ENCODE measurements at regions of chr12 and their contacts with region 1.

Region 1: GRCh38 chr12:64759035-64759901 is at the start of gene GNS:
- DNase-seq: peak; percentile 81 to 95 (median 92)
- ATAC-seq: peak; percentile 86
- H3K4me3 ChIP-seq: peak within 1 kb of the TSS; percentile 70 to 80
- H3K4me3 Mint-ChIP-seq: peak within 1 kb of the TSS; percentile 97
- H3K27ac ChIP-seq: peak within 1 kb of the TSS; percentile 44 to 80
- H3K27ac Mint-ChIP-seq: peak within 1 kb of the TSS; percentile 93
- H3K4me1 ChIP-seq: peaks cover 24% of the 10 kb centered on the region
- H3K4me1 Mint-ChIP-seq: peaks cover 57% of the 10 kb centered on the region
- H3K27me3 ChIP-seq: no peaks in the 10 kb centered on the region
- H3K27me3 Mint-ChIP-seq: no peaks in the 10 kb centered on the region
- CTCF ChIP-seq: no peak
- total RNA-seq, gene GNS: 6.3 to 7.7 TPM

Region 2: DNA sequence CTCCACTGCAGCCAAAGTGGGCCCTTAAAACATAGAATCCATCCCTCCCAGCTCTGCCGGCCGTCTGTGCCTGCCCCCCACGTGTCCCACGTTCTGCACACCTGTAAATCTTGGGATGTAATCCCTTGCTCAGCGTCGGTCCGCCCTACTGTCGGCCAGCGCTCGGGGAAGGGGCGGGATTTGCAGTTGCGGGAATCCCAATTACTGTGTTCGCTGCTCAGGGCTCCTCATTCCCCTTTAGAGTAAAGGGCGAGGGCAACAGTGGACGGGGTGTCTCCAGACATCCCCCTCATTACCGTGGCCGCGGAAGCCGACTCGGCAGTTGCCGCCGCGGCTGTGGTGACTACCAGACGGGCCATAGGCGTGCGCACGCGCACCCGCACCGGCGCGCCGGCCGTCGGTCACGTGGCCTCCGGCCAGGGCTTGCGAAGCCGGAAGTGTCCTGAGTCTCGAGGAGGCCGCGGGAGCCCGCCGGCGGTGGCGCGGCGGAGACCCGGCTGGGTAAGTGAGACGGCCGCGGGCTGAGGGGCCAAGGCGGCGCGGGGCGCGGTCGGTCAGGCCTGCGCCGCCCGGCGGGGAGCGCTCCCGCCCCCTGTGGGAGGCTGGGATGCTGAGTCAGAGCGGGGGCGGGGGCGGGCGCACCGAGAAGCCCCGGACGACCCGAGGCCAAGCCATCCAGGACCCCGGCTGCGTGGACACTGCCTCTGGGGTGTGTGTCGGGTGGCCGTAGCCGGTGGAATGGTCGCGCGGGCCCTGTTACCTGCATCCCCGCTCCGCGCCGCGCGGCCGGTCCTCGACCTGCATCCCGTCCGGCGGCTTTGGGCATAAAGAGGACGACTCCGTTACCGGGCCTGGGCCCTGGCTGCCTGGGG is 307.3 kb before region 1 on chr12 and contains the start of gene TBK1:
- CTCF ChIA-PET with region 1: no interaction called
- POLR2A ChIA-PET with region 1: no interaction called
- intact Hi-C with region 1: loop called in 1 of 2 experiments (anchors 5 kb)
- DNase-seq: peak; percentile 8 to 76 (median 51)
- ATAC-seq: peak; percentile 64
- H3K4me3 ChIP-seq: peak within 1 kb of the TSS; percentile 88 to 99
- H3K4me3 Mint-ChIP-seq: peak within 1 kb of the TSS; percentile 89
- H3K27ac ChIP-seq: peak within 1 kb of the TSS; percentile 76 to 93
- H3K27ac Mint-ChIP-seq: peak within 1 kb of the TSS; percentile 90
- H3K4me1 ChIP-seq: peaks cover 8% of the 10 kb centered on the region
- H3K4me1 Mint-ChIP-seq: peaks cover 40% of the 10 kb centered on the region
- H3K27me3 ChIP-seq: no peaks in the 10 kb centered on the region
- H3K27me3 Mint-ChIP-seq: no peaks in the 10 kb centered on the region
- CTCF ChIP-seq: no peak
- total RNA-seq, gene TBK1: 6.2 to 6.7 TPM

Region 3: GRCh38 chr12:64650762-64651161 is 108.5 kb before region 1 on chr12:
- CTCF ChIA-PET with region 1: no interaction called
- POLR2A ChIA-PET with region 1: no interaction called
- intact Hi-C with region 1: no loop called
- DNase-seq: no peak
- ATAC-seq: no peak
- H3K4me3 ChIP-seq: no peak overlapping the region
- H3K4me3 Mint-ChIP-seq: peak overlapping the region; percentile 0
- H3K27ac ChIP-seq: no peak overlapping the region
- H3K27ac Mint-ChIP-seq: peak overlapping the region; percentile 68
- H3K4me1 ChIP-seq: peaks cover 62% of the 10 kb centered on the region
- H3K4me1 Mint-ChIP-seq: peaks cover 78% of the 10 kb centered on the region
- H3K27me3 ChIP-seq: no peaks in the 10 kb centered on the region
- H3K27me3 Mint-ChIP-seq: no peaks in the 10 kb centered on the region
- CTCF ChIP-seq: no peak

Region 4: DNA sequence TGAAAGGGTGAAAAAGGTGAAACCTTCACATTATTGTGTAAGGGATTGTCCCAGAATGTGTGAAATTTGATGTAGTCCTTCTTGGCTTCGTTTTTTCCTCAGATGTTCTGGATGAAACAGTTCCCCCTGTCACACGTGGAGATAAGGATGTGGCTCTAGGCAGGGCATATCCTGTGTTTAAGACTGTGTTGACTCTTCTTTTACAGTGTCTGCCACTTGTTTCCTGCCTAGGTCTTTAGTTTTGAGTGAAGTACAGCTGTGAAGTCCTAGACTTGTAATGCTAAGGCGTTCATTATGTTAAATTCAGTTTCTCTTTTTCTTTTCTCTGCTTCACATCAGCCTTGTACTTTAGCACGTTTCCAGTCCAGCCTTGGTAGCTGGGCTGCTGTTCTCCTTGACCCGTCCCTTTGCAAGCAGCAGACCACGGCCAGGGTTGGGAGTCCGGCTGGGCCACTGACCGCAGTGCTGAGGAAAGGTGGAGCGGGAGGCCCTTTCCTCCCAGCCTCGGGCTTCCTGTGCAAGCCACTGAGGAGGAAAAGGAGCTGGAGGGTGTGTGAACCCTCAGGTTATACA is 89.9 kb before region 1 on chr12:
- CTCF ChIA-PET with region 1: no interaction called
- POLR2A ChIA-PET with region 1: no interaction called
- intact Hi-C with region 1: no loop called
- DNase-seq: peak; percentile 18 to 94 (median 57)
- ATAC-seq: peak; percentile 79
- H3K4me3 ChIP-seq: peak overlapping the region; percentile 51 to 57
- H3K4me3 Mint-ChIP-seq: peak overlapping the region; percentile 87
- H3K27ac ChIP-seq: peak overlapping the region; percentile 77 to 94
- H3K27ac Mint-ChIP-seq: peak overlapping the region; percentile 98
- H3K4me1 ChIP-seq: peaks cover 92% of the 10 kb centered on the region
- H3K4me1 Mint-ChIP-seq: peaks cover 90% of the 10 kb centered on the region
- H3K27me3 ChIP-seq: no peaks in the 10 kb centered on the region
- H3K27me3 Mint-ChIP-seq: no peaks in the 10 kb centered on the region
- CTCF ChIP-seq: no peak

Region 5: DNA sequence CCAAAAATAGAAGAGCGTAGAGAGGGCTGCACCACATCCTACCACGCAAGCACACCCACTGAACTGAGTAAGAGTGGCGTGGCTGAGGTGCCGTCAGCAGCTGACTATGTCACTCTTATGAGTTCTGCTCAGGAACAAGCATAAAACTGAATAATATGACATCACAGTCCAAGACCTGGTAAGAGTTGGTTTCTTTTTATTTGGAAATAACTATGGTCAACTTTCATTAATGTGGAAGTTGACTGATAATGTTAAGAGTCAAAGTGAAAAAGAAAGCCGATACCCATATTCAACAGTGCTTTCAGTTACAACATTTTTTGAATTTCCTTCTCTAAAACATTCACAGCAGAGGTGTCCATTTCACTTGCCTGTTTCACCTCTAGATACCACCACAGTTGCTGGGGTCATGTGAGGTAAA is 44.7 kb before region 1 on chr12:
- CTCF ChIA-PET with region 1: no interaction called
- POLR2A ChIA-PET with region 1: no interaction called
- intact Hi-C with region 1: no loop called
- DNase-seq: peak in 5 of 9 experiments; percentile 20 to 79 (median 57)
- ATAC-seq: peak; percentile 94
- H3K4me3 ChIP-seq: no peak overlapping the region
- H3K4me3 Mint-ChIP-seq: no peak overlapping the region
- H3K27ac ChIP-seq: peak overlapping the region in 1 of 2 experiments; percentile 49
- H3K27ac Mint-ChIP-seq: peak overlapping the region; percentile 73
- H3K4me1 ChIP-seq: peaks cover 10% of the 10 kb centered on the region
- H3K4me1 Mint-ChIP-seq: peaks cover 31% of the 10 kb centered on the region
- H3K27me3 ChIP-seq: no peaks in the 10 kb centered on the region
- H3K27me3 Mint-ChIP-seq: no peaks in the 10 kb centered on the region
- CTCF ChIP-seq: no peak

Region 6: DNA sequence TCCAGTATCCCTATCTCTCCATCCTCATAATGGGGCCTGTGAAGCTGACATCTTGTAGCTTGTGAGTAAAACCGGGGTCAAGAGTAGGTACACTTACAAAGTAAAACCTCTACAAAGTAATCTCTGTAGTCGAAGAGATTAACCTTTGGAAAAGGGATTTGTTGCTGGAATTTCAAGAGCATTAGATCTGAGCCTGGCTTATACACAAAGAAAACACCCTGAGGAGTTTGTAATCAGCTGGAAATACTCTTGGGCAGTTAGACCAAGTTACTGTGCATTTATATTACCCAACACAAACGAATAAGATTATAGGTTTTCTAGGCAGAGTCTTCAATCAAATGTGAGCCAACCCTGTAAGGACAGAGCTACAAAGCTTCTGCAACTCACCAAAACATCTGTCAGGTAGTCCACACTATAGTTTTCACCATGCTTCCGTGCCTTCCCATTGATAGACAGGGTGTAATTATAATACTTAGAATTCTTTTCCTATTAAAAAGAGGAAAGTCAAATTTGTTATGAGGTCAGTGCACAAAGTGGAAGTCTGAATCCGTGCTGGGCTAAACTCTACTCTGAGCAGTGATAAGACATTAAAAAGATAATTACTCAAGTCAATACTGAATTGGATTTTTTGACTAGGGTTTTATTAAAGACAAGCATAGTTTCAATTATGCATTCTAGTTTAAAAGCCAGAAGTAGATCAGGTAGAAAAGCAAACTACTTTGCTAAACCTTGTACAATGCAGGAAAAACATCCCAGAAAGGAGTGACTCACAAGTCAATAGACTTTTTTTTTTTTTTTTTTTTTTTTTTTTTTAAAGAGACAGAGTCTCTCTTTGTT is 14.6 kb before region 1 on chr12:
- CTCF ChIA-PET with region 1: no interaction called
- POLR2A ChIA-PET with region 1: no interaction called
- intact Hi-C with region 1: no loop called
- DNase-seq: no peak
- ATAC-seq: no peak
- H3K4me3 ChIP-seq: no peak overlapping the region
- H3K4me3 Mint-ChIP-seq: no peak overlapping the region
- H3K27ac ChIP-seq: no peak overlapping the region
- H3K27ac Mint-ChIP-seq: no peak overlapping the region
- H3K4me1 ChIP-seq: no peaks in the 10 kb centered on the region
- H3K4me1 Mint-ChIP-seq: no peaks in the 10 kb centered on the region
- H3K27me3 ChIP-seq: no peaks in the 10 kb centered on the region
- H3K27me3 Mint-ChIP-seq: no peaks in the 10 kb centered on the region
- CTCF ChIP-seq: no peak

Measured in CD8-positive, alpha-beta T cell (primary cell).